Activated CD4-positive, alpha-beta T cell treated with anti-CD3 and anti-CD28 coated beads, Interleukin-2, amount 10 ng/mL, durations not matched to agents 24 days and 14 days (primary cell): ENCODE measurements at regions of chr10 and their contacts with region 1.

Region 1: DNA sequence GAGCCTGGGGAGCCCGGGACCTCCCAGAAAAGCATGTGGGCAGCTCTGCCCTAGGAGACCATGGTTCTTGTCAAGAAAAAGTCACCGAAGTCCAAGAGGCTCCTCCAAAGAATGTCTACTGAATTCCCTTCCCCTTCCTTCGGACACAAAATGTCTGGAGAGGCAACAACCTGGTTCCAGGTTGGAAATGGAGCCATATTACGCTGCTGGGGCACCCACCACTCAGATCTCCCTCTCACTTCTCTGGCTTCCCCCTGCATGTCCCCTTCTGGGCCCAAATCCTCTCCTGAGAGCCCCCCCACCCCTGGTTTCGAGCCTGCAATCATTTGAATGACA is 52.6 kb downstream of the RGS10 start:
- DNase-seq: no peak
- H3K4me3 Mint-ChIP-seq: peak overlapping the region; percentile 81
- H3K27ac Mint-ChIP-seq: peak overlapping the region; percentile 90
- H3K4me1 Mint-ChIP-seq: peaks cover 40% of the 10 kb centered on the region
- H3K27me3 Mint-ChIP-seq: no peaks in the 10 kb centered on the region

Region 2: DNA sequence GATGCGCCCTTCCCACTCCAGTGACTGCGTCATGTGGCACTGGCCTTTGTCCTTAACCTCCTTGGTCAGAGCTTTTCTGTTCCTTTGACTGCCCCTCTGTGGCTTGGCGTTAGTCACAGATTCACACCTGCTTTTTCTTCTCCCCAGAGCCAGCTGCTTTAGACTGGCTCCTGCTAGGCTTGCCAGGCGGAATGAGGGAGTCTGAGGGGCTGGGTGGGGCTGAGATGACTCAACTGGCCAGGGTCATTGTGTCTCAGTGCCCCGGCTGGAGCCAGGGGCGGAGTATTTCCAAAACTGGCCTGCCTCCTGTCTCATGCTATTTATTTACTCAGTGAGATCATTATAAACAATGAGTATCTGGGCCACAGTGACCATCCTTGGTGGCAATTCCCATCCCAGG is 1753.3 kb before region 1 on chr10:
- intact Hi-C with region 1: no loop called
- DNase-seq: no peak
- H3K4me3 Mint-ChIP-seq: no peak overlapping the region
- H3K27ac Mint-ChIP-seq: no peak overlapping the region
- H3K4me1 Mint-ChIP-seq: no peaks in the 10 kb centered on the region
- H3K27me3 Mint-ChIP-seq: peaks cover 31% of the 10 kb centered on the region

Region 3: DNA sequence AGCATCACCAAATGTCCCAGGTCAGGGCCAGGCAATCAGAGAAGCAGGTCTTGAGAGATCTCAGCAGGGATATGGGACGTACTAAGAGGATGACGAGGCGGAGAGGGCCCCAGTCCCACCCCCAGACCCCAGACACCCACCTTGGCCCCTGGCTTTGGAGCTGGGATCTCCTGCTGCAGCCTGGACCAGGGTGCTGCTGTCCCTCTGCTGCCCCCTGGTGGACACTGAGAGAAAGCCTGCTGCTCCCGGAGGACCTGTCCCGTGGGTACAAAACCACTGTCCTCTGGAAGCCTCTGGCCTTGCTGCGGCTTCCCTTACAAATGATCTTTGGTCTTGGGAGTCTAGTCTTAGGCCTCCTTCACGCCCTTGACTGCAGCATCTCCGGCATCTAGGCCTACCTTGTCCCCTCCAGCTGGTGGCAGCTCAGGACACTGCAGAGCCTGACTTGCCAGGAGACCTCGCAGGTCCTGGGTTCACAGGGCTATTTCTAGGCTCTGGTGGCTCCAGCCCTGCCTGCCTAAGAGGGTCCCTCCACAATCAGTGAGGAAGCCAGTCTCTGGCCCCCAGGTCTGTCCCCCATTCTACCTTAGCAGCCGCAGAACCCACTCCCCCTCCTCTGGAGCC is 44.5 kb before region 1 on chr10:
- intact Hi-C with region 1: loop called (anchors 5 kb)
- DNase-seq: peak; percentile 95
- H3K4me3 Mint-ChIP-seq: no peak overlapping the region
- H3K27ac Mint-ChIP-seq: no peak overlapping the region
- H3K4me1 Mint-ChIP-seq: peaks cover 7% of the 10 kb centered on the region
- H3K27me3 Mint-ChIP-seq: no peaks in the 10 kb centered on the region

Region 4: GRCh38 chr10:119478111-119478802 is 11.7 kb before region 1 on chr10:
- intact Hi-C with region 1: loop called (anchors 1 kb)
- DNase-seq: peak; percentile 78
- H3K4me3 Mint-ChIP-seq: peak overlapping the region; percentile 66
- H3K27ac Mint-ChIP-seq: peak overlapping the region; percentile 80
- H3K4me1 Mint-ChIP-seq: peaks cover 32% of the 10 kb centered on the region
- H3K27me3 Mint-ChIP-seq: no peaks in the 10 kb centered on the region

Region 5: DNA sequence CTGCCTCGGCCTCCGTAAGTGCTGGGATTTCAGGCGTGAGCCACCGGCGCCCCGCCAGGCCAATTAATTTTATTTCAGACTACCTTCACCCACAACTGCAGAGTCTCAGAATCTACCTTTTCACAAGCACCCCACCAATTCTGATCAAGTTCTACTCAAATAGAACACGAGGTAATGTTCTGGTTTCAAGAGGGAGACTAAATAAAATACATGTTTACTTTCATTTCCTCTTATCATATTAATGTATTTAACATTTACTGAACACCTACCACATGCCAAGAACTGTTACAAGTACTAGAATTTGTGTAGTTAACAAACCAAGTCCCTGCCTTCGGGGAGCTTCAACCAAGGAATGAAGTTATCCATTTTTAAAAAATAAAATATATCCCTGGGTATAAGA is 78.0 kb after region 1 on chr10:
- intact Hi-C with region 1: no loop called
- DNase-seq: no peak
- H3K4me3 Mint-ChIP-seq: no peak overlapping the region
- H3K27ac Mint-ChIP-seq: no peak overlapping the region
- H3K4me1 Mint-ChIP-seq: no peaks in the 10 kb centered on the region
- H3K27me3 Mint-ChIP-seq: no peaks in the 10 kb centered on the region

Region 6: DNA sequence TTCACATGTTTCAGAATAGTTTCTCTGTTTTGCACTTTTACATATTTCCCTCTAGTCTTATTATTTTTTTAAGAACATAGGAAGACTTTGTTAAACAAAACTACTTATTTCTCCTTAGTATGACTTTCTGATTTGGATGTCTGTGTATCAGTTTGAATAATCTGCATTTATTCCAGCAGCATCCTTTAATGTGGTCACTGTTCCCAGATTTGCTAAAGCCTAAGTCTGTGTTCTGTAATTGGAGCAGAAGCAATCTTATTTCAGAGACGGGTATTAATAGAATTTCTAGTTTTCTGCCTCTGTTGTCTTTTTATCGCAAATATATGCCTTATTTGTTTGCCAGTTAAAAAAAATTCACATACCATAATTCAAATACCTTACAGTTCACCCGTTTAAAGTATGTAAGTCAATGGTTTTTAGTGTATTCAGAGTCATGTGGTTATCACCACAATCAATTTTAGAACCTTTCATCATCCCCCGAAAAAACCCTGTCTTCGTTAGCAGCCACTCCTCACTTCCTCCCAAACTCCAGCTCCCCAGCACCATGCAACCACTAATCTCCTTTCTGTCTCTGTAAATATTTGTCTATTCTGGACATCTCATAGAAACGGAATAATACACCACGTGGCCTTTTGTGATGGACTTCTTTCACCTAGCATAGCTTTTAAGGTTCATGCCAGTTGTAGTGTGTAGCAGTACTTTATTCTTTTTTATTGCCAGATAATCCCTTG is 294.5 kb after region 1 on chr10:
- intact Hi-C with region 1: no loop called
- DNase-seq: peak; percentile 72
- H3K4me3 Mint-ChIP-seq: peak overlapping the region; percentile 23
- H3K27ac Mint-ChIP-seq: peak overlapping the region; percentile 4
- H3K4me1 Mint-ChIP-seq: peaks cover 23% of the 10 kb centered on the region
- H3K27me3 Mint-ChIP-seq: no peaks in the 10 kb centered on the region